ENCODE measurements at regions of chr10 and their contacts with region 1.

Region 1: DNA sequence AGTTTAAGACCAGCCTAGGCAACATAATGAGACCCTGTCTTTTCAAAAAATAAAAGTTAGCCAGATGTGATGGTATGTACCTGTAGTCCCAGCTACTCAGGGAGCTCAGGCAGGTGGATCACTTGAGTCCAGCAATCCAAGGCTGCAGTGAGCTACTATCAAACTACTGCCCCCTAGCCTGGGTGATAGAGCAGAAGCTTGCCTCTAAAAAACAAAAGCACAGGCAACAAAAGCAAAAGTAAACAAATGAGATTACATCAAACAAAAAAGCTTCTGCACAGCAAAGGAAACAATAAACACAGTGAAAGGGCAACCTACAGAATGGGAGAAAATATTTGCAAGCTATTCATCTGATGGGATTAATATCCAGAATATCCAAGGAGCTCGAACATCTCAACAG is 65.4 kb downstream of the FANK1 start:
- DNase-seq: no peak
- ATAC-seq: peak; percentile 63
- H3K4me3 Mint-ChIP-seq: no peak overlapping the region
- H3K27ac Mint-ChIP-seq: no peak overlapping the region
- H3K4me1 Mint-ChIP-seq: peaks cover 7% of the 10 kb centered on the region; the same call in 1 of the 2 replicates
- H3K27me3 Mint-ChIP-seq: no peaks in the 10 kb centered on the region
- CTCF ChIP-seq: no peak

Region 2: GRCh38 chr10:125976960-125977603 is 15.3 kb after region 1 on chr10:
- CTCF ChIA-PET with region 1: interaction called, 11 read pairs
- POLR2A ChIA-PET with region 1: interaction called, 3 read pairs
- DNase-seq: peak; percentile 35
- ATAC-seq: peak; percentile 80
- H3K4me3 Mint-ChIP-seq: no peak overlapping the region
- H3K27ac Mint-ChIP-seq: no peak overlapping the region
- H3K4me1 Mint-ChIP-seq: peaks cover 16% of the 10 kb centered on the region
- H3K27me3 Mint-ChIP-seq: no peaks in the 10 kb centered on the region
- CTCF ChIP-seq: peak; percentile 10; the same call in 1 of the 2 replicates

Region 3: GRCh38 chr10:126017961-126018560 is 56.3 kb after region 1 on chr10:
- CTCF ChIA-PET with region 1: no interaction called
- POLR2A ChIA-PET with region 1: no interaction called
- DNase-seq: no peak
- ATAC-seq: no peak
- H3K4me3 Mint-ChIP-seq: no peak overlapping the region
- H3K27ac Mint-ChIP-seq: no peak overlapping the region
- H3K4me1 Mint-ChIP-seq: peaks cover 2% of the 10 kb centered on the region; the same call in 1 of the 2 replicates
- H3K27me3 Mint-ChIP-seq: no peaks in the 10 kb centered on the region
- CTCF ChIP-seq: no peak